ENCODE measurements at regions of chrX and their contacts with region 1.

Region 1: DNA sequence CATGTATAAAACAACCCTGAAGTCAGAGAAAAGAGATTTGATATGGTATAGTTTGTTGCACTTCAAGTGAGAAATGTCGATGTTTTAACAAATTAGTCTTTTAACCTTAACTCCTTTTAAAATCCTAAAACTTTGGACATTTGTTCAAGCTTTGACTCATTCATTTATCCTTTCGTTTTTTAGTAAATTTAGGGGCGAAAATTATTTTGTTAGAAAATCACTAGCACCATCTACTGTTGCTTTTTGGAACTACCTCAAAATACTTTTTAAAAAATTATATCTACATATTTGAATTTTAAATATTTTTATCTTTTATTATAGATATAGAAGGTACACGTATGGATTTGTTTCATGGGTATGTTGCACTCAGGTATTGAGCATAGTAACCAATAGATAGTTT is 165.1 kb upstream of the POF1B start:
- DNase-seq: no peak
- ATAC-seq: no peak
- H3K4me3 Mint-ChIP-seq: no peak overlapping the region
- H3K27ac Mint-ChIP-seq: no peak overlapping the region
- H3K4me1 Mint-ChIP-seq: no peaks in the 10 kb centered on the region
- H3K27me3 Mint-ChIP-seq: no peaks in the 10 kb centered on the region
- CTCF ChIP-seq: no peak

Region 2: GRCh38 chrX:84046403-84046984 is 1498.1 kb before region 1 on chrX:
- CTCF ChIA-PET with region 1: no interaction called
- POLR2A ChIA-PET with region 1: no interaction called
- intact Hi-C with region 1: loop called (anchors 10 kb)
- DNase-seq: no peak
- ATAC-seq: no peak
- H3K4me3 Mint-ChIP-seq: no peak overlapping the region
- H3K27ac Mint-ChIP-seq: no peak overlapping the region
- H3K4me1 Mint-ChIP-seq: no peaks in the 10 kb centered on the region
- H3K27me3 Mint-ChIP-seq: no peaks in the 10 kb centered on the region
- CTCF ChIP-seq: no peak

Region 3: DNA sequence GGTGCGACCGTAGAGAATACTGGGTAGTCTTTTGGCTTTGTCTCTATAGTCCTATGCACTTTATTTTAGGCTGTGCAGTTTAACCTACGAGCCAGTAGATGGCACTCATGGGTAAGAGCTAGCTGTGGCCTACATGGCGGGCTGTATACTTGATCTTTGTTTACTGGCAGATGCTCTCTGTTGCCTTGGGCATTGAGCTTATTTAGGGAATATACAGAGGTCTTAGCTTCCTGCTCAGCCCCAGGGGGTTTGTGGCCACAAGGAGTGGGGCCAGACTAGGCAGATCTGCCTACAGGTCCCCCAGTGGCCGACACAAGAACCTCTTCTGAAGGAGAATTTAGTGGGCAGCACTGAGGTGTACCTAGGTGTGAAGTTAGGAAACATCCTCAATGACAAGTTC is 814.8 kb before region 1 on chrX:
- CTCF ChIA-PET with region 1: no interaction called
- POLR2A ChIA-PET with region 1: no interaction called
- intact Hi-C with region 1: loop called (anchors 2 kb)
- DNase-seq: no peak
- ATAC-seq: peak; percentile 77
- H3K4me3 Mint-ChIP-seq: no peak overlapping the region
- H3K27ac Mint-ChIP-seq: no peak overlapping the region
- H3K4me1 Mint-ChIP-seq: no peaks in the 10 kb centered on the region
- H3K27me3 Mint-ChIP-seq: no peaks in the 10 kb centered on the region
- CTCF ChIP-seq: no peak

Region 4: GRCh38 chrX:85084770-85085393 is 459.7 kb before region 1 on chrX:
- CTCF ChIA-PET with region 1: no interaction called
- POLR2A ChIA-PET with region 1: no interaction called
- intact Hi-C with region 1: loop called (anchors 1 kb)
- DNase-seq: no peak
- ATAC-seq: no peak
- H3K4me3 Mint-ChIP-seq: no peak overlapping the region
- H3K27ac Mint-ChIP-seq: no peak overlapping the region
- H3K4me1 Mint-ChIP-seq: no peaks in the 10 kb centered on the region
- H3K27me3 Mint-ChIP-seq: no peaks in the 10 kb centered on the region
- CTCF ChIP-seq: no peak

Region 5: GRCh38 chrX:85111347-85111746 is 433.3 kb before region 1 on chrX:
- CTCF ChIA-PET with region 1: interaction called, 6 read pairs
- POLR2A ChIA-PET with region 1: no interaction called
- intact Hi-C with region 1: loop called (anchors 1 kb)
- DNase-seq: no peak
- ATAC-seq: no peak
- H3K4me3 Mint-ChIP-seq: no peak overlapping the region
- H3K27ac Mint-ChIP-seq: no peak overlapping the region
- H3K4me1 Mint-ChIP-seq: no peaks in the 10 kb centered on the region
- H3K27me3 Mint-ChIP-seq: no peaks in the 10 kb centered on the region
- CTCF ChIP-seq: no peak

Region 6: DNA sequence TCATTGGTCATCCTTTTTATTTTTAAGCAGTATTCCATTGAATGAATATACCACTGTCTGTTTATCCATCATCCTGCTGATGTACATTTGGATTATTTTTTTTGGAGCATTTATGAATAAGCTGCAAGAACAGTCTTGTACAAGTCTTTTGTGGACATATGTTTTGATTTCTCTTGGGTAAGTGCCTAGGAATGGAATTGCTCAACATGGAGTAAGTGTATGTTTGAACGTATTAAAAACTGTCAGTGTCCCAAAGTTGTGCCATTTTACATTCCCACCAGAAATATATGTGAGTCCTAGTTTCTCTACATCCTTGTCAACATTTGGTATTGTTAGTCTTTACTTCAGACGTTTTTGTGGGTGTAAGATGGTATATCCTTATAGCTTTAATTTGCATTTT is 121.9 kb after region 1 on chrX:
- CTCF ChIA-PET with region 1: no interaction called
- POLR2A ChIA-PET with region 1: no interaction called
- intact Hi-C with region 1: no loop called
- DNase-seq: no peak
- ATAC-seq: no peak
- H3K4me3 Mint-ChIP-seq: no peak overlapping the region
- H3K27ac Mint-ChIP-seq: no peak overlapping the region
- H3K4me1 Mint-ChIP-seq: no peaks in the 10 kb centered on the region
- H3K27me3 Mint-ChIP-seq: no peaks in the 10 kb centered on the region
- CTCF ChIP-seq: no peak

Measured in activated B cell treated with CpG ODN at 0.5 μM for 24 hours (primary cell).